Activated B cell treated with CpG ODN at 0.5 μM for 24 hours (primary cell): ENCODE measurements at regions of chr7 and their contacts with region 1.

Region 1: DNA sequence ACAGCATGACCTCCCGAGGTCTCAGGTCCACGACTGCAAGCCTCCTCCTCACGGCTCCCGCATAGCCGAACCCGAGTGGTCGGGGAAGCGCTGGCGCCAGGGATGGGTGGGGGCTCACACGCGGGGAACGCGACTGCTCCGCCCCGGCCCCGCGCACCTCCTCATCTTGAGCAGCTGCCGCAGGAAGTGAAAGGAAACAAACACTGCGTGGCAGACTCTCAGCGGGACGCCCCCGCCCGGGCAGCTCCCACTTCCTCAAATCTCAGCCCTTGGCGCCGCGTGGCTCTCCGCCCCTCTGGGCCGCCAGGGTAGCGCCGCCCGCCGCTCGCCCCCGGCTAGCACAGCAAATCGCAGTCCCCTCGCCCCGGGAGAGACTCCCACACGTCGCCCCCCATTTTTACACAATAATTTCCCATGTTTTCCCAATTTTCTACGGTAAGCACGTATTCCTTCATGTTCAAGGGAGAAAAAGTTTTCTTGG is at the start of gene TMEM243:
- DNase-seq: peak; percentile 85
- ATAC-seq: peak; percentile 60
- H3K4me3 Mint-ChIP-seq: peak within 1 kb of the TSS; percentile 98
- H3K27ac Mint-ChIP-seq: peak within 1 kb of the TSS; percentile 99
- H3K4me1 Mint-ChIP-seq: peaks cover 51% of the 10 kb centered on the region
- H3K27me3 Mint-ChIP-seq: no peaks in the 10 kb centered on the region
- CTCF ChIP-seq: no peak
- total RNA-seq, gene TMEM243: 106 and 111 TPM in 2 replicates

Region 2: GRCh38 chr7:87059525-87060287 is 159.9 kb before region 1 on chr7 and contains the start of gene ELAPOR2:
- CTCF ChIA-PET with region 1: interaction called, 3 read pairs
- POLR2A ChIA-PET with region 1: interaction called, 16 read pairs
- intact Hi-C with region 1: loop called (anchors 1 kb)
- DNase-seq: peak; percentile 94
- ATAC-seq: peak; percentile 96
- H3K4me3 Mint-ChIP-seq: peak within 1 kb of the TSS; percentile 88
- H3K27ac Mint-ChIP-seq: peak within 1 kb of the TSS; percentile 77
- H3K4me1 Mint-ChIP-seq: peaks cover 14% of the 10 kb centered on the region
- H3K27me3 Mint-ChIP-seq: no peaks in the 10 kb centered on the region
- CTCF ChIP-seq: no peak
- total RNA-seq, gene ELAPOR2: 4.5 and 5.1 TPM in 2 replicates

Region 3: GRCh38 chr7:87199700-87200450 is 19.7 kb before region 1 on chr7:
- CTCF ChIA-PET with region 1: interaction called, 7 read pairs
- POLR2A ChIA-PET with region 1: interaction called, 143 read pairs
- intact Hi-C with region 1: loop called (anchors 2 kb)
- DNase-seq: no peak
- ATAC-seq: no peak
- H3K4me3 Mint-ChIP-seq: peak overlapping the region; percentile 0
- H3K27ac Mint-ChIP-seq: peak overlapping the region; percentile 71
- H3K4me1 Mint-ChIP-seq: peaks cover 73% of the 10 kb centered on the region
- H3K27me3 Mint-ChIP-seq: no peaks in the 10 kb centered on the region
- CTCF ChIP-seq: no peak

Region 4: GRCh38 chr7:87345166-87345927 is 125.8 kb after region 1 on chr7 and contains the start of gene CROT:
- CTCF ChIA-PET with region 1: no interaction called
- POLR2A ChIA-PET with region 1: interaction called, 11 read pairs
- intact Hi-C with region 1: loop called (anchors 1 kb)
- DNase-seq: peak; percentile 95
- ATAC-seq: peak; percentile 98
- H3K4me3 Mint-ChIP-seq: peak within 1 kb of the TSS; percentile 96
- H3K27ac Mint-ChIP-seq: peak within 1 kb of the TSS; percentile 96
- H3K4me1 Mint-ChIP-seq: peaks cover 25% of the 10 kb centered on the region
- H3K27me3 Mint-ChIP-seq: no peaks in the 10 kb centered on the region
- CTCF ChIP-seq: no peak
- total RNA-seq, gene CROT: 7.9 and 9.2 TPM in 2 replicates

Region 5: DNA sequence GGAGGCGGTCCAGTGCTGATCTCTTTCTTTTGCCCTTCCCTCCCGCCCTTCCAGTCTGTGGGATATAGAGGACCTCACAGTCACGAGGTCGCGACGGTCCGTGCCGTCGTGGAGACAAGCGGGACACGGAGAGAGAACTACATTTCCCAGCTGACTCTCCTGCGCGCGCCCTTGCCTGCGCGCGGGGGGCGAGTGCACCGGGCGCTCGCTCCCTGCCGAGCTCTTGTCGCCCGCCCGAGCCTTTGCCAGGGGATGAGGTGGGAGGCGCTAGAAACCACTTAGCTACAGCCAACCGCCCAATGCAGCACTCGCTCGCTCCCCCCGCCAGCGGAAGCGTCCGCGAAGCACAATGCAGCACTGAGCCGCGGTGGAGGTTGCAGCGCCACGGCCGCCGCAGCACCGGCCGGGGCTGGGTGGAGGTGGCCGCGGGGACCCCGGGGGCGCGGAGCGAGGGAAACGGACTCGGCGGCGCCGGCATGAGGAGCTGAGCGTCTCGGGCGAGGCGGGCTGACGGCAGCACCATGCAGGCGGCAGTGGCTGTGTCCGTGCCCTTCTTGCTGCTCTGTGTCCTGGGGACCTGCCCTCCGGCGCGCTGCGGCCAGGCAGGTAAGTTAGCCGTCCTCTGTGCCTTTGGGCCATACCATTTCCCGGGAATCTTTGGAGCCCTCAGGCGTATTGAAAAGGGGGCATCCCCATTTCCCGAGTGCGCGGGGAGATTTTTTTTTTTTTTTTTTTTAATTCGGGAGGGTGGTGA is 714.5 kb after region 1 on chr7 and contains the start of gene ADAM22:
- CTCF ChIA-PET with region 1: no interaction called
- POLR2A ChIA-PET with region 1: no interaction called
- intact Hi-C with region 1: loop called (anchors 2 kb)
- DNase-seq: peak; percentile 68
- ATAC-seq: peak; percentile 97
- H3K4me3 Mint-ChIP-seq: peak within 1 kb of the TSS; percentile 89
- H3K27ac Mint-ChIP-seq: peak within 1 kb of the TSS; percentile 32
- H3K4me1 Mint-ChIP-seq: peaks cover 14% of the 10 kb centered on the region
- H3K27me3 Mint-ChIP-seq: peaks cover 11% of the 10 kb centered on the region
- CTCF ChIP-seq: no peak
- total RNA-seq, gene ADAM22: 0.71 and 0.88 TPM in 2 replicates

Region 6: GRCh38 chr7:88566173-88566729 is 1346.7 kb after region 1 on chr7:
- CTCF ChIA-PET with region 1: no interaction called
- POLR2A ChIA-PET with region 1: no interaction called
- intact Hi-C with region 1: no loop called
- DNase-seq: no peak
- ATAC-seq: no peak
- H3K4me3 Mint-ChIP-seq: no peak overlapping the region
- H3K27ac Mint-ChIP-seq: no peak overlapping the region
- H3K4me1 Mint-ChIP-seq: no peaks in the 10 kb centered on the region
- H3K27me3 Mint-ChIP-seq: no peaks in the 10 kb centered on the region
- CTCF ChIP-seq: no peak